ENCODE measurements at regions of chr10 and their contacts with region 1.

Region 1: DNA sequence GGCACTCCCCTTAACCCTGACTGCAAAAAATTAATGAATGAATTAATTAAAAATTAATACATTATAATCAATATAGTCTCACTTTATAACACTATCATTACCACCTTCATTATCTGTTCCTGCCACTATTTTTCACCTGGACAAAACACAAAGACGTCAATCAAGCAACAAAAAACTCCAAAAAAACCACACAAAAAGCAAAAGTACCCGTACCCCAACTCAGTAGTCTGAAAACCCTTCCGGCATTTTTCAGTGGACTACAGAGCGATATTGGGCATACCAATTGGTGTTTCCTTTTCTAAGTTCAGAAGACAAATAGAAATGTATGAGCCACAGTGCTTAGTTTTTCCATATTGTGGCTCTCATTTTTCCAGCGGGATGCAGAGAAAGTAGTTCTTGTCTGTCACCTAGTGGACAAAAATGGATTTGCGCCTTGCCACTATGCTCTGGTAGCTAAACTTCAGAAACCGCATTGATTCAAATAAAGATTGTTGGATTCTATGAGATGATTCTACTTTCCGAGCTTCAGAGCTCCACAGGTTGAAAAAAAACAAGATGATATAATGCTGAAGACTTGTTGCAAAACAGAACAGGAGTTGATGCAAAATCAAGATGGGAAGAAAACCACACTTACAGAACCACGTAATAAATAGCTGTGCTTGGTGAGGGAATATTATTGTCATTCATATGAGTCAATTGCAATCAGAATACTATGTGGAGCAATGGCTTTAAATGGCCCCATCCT is 50.6 kb upstream of the ITGB1 start:
- DNase-seq: peak; percentile 92
- ATAC-seq: peak; percentile 43
- H3K4me3 ChIP-seq: no peak overlapping the region
- H3K27ac ChIP-seq: no peak overlapping the region; the same call in 1 of the 2 replicates
- H3K4me1 ChIP-seq: peaks cover 11% of the 10 kb centered on the region
- H3K27me3 ChIP-seq: no peaks in the 10 kb centered on the region
- CTCF ChIP-seq: peak; percentile 99
- POLR2A ChIP-seq: peak; percentile 56; the same call in 1 of the 2 replicates
- RAD21 ChIP-seq: peak; percentile 98

Region 2: DNA sequence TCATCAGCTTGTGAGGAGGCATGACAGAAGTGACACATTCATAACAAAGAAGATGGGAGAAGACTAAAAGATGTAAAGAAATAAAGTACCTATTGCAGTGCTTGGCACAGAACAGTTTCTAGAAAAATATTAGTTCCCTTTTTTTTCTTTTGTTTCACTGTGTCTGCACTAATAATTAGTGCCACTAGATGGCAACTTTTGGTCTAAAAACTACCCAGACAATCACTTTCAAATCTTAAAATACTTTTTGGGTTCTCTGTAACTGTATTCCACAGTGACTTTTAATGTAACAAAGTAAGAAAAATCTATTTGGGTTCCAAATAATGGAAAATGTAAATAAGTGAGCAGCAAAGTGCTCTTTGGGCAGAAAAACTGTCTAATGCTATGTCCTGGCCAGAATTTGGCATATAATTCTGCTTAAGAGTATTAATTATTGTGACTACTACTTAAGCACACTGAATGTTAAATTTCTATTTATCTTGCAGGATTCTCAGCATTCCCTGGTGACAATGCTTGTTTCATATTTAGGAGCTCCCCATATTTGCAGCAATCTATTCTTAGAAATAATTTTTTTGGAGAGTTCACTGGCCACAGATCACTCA is 817.7 kb before region 1 on chr10:
- CTCF ChIA-PET with region 1: no interaction called
- POLR2A ChIA-PET with region 1: no interaction called
- dilution Hi-C with region 1: no loop called
- in situ Hi-C with region 1: no loop called
- intact Hi-C with region 1: loop called (anchors 5 kb)
- DNase-seq: peak; percentile 36
- ATAC-seq: peak; percentile 81
- H3K4me3 ChIP-seq: no peak overlapping the region
- H3K27ac ChIP-seq: no peak overlapping the region
- H3K4me1 ChIP-seq: no peaks in the 10 kb centered on the region
- H3K27me3 ChIP-seq: peaks cover 7% of the 10 kb centered on the region
- CTCF ChIP-seq: peak; percentile 77
- POLR2A ChIP-seq: no peak
- RAD21 ChIP-seq: peak; percentile 61

Region 3: GRCh38 chr10:32445740-32446535 is 562.7 kb before region 1 on chr10 and contains the start of gene CCDC7:
- CTCF ChIA-PET with region 1: no interaction called
- POLR2A ChIA-PET with region 1: no interaction called
- dilution Hi-C with region 1: no loop called
- in situ Hi-C with region 1: no loop called
- intact Hi-C with region 1: loop called (anchors 1 kb)
- DNase-seq: peak; percentile 84
- ATAC-seq: peak; percentile 98
- H3K4me3 ChIP-seq: peak within 1 kb of the TSS; percentile 56
- H3K27ac ChIP-seq: peak within 1 kb of the TSS; percentile 87
- H3K4me1 ChIP-seq: no peaks in the 10 kb centered on the region; the same call in 1 of the 2 replicates
- H3K27me3 ChIP-seq: peaks cover 1% of the 10 kb centered on the region; the same call in 1 of the 2 replicates
- CTCF ChIP-seq: peak; percentile 68
- POLR2A ChIP-seq: peak; percentile 87
- RAD21 ChIP-seq: peak; percentile 48
- total RNA-seq, gene CCDC7: 3.9 and 4.3 TPM in 2 replicates

Region 4: GRCh38 chr10:32746869-32747268 is 261.8 kb before region 1 on chr10:
- CTCF ChIA-PET with region 1: no interaction called
- POLR2A ChIA-PET with region 1: no interaction called
- dilution Hi-C with region 1: no loop called
- in situ Hi-C with region 1: no loop called
- intact Hi-C with region 1: no loop called
- DNase-seq: no peak
- ATAC-seq: no peak
- H3K4me3 ChIP-seq: no peak overlapping the region
- H3K27ac ChIP-seq: no peak overlapping the region
- H3K4me1 ChIP-seq: no peaks in the 10 kb centered on the region
- H3K27me3 ChIP-seq: no peaks in the 10 kb centered on the region
- CTCF ChIP-seq: no peak
- POLR2A ChIP-seq: no peak
- RAD21 ChIP-seq: no peak

Region 5: GRCh38 chr10:32937911-32938424 is 70.7 kb before region 1 on chr10:
- CTCF ChIA-PET with region 1: no interaction called
- POLR2A ChIA-PET with region 1: no interaction called
- dilution Hi-C with region 1: no loop called
- in situ Hi-C with region 1: no loop called
- intact Hi-C with region 1: loop called (anchors 1 kb)
- DNase-seq: peak; percentile 64
- ATAC-seq: peak; percentile 60
- H3K4me3 ChIP-seq: no peak overlapping the region
- H3K27ac ChIP-seq: peak overlapping the region; percentile 94
- H3K4me1 ChIP-seq: peaks cover 30% of the 10 kb centered on the region
- H3K27me3 ChIP-seq: no peaks in the 10 kb centered on the region
- CTCF ChIP-seq: no peak
- POLR2A ChIP-seq: no peak
- RAD21 ChIP-seq: no peak

Region 6: GRCh38 chr10:33115738-33116719 is 107.4 kb after region 1 on chr10:
- CTCF ChIA-PET with region 1: interaction called, 14 read pairs
- POLR2A ChIA-PET with region 1: no interaction called
- dilution Hi-C with region 1: no loop called
- in situ Hi-C with region 1: loop called (anchors 10 kb)
- intact Hi-C with region 1: loop called (anchors 10 kb)
- DNase-seq: peak; percentile 83
- ATAC-seq: peak; percentile 25
- H3K4me3 ChIP-seq: no peak overlapping the region
- H3K27ac ChIP-seq: peak overlapping the region; percentile 78
- H3K4me1 ChIP-seq: peaks cover 18% of the 10 kb centered on the region
- H3K27me3 ChIP-seq: no peaks in the 10 kb centered on the region
- CTCF ChIP-seq: peak; percentile 56
- POLR2A ChIP-seq: no peak
- RAD21 ChIP-seq: peak; percentile 54

Region 7: GRCh38 chr10:33306701-33307512 is 298.2 kb after region 1 on chr10:
- CTCF ChIA-PET with region 1: no interaction called
- POLR2A ChIA-PET with region 1: no interaction called
- dilution Hi-C with region 1: no loop called
- in situ Hi-C with region 1: no loop called
- intact Hi-C with region 1: loop called (anchors 10 kb)
- DNase-seq: peak; percentile 79
- ATAC-seq: peak; percentile 60
- H3K4me3 ChIP-seq: no peak overlapping the region
- H3K27ac ChIP-seq: peak overlapping the region; percentile 45; the same call in 1 of the 2 replicates
- H3K4me1 ChIP-seq: peaks cover 16% of the 10 kb centered on the region
- H3K27me3 ChIP-seq: no peaks in the 10 kb centered on the region
- CTCF ChIP-seq: no peak
- POLR2A ChIP-seq: no peak
- RAD21 ChIP-seq: no peak

Measured in IMR-90 (cell line).